HEK293 (cell line): ENCODE measurements at regions of chr6 and their contacts with region 1.

Region 1: GRCh38 chr6:44312901-44313788 is at the start of gene AARS2:
- H3K4me3 ChIP-seq: peak within 1 kb of the TSS; percentile 69
- H3K27ac ChIP-seq: peak within 1 kb of the TSS; percentile 71; the same call in 1 of the 2 replicates
- H3K4me1 ChIP-seq: peaks cover 5% of the 10 kb centered on the region; the same call in 1 of the 2 replicates
- CTCF ChIP-seq: peak; percentile 98

Region 2: DNA sequence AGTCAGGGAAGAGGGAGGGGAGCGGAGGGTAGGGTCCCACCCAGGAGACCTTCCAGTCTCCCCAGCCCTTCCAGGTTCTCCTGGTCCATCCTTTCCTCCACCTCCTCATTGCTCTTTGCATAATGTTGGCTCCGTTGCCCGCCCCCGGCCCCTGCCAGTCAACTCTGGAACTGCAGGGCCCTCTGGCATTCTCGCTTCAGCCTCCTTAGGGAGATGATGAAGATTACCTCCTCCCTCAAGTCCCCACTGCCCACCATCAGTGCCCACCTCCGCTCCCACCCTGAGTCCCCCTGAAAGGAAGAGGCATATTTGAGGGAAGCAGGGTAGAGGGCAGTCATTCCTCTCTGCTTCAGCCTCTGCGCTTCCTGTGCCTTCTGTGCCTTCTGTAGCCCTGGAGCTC is 177.3 kb before region 1 on chr6:
- CTCF ChIA-PET with region 1: no interaction called
- POLR2A ChIA-PET with region 1: no interaction called
- H3K4me3 ChIP-seq: no peak overlapping the region
- H3K27ac ChIP-seq: no peak overlapping the region
- H3K4me1 ChIP-seq: peaks cover 7% of the 10 kb centered on the region
- CTCF ChIP-seq: no peak

Region 3: GRCh38 chr6:44257025-44257752 is 56.0 kb before region 1 on chr6 and contains the start of gene SLC35B2:
- CTCF ChIA-PET with region 1: interaction called, 20 read pairs
- POLR2A ChIA-PET with region 1: interaction called, 15 read pairs
- H3K4me3 ChIP-seq: peak within 1 kb of the TSS; percentile 82
- H3K27ac ChIP-seq: peak within 1 kb of the TSS; percentile 65; the same call in 1 of the 2 replicates
- H3K4me1 ChIP-seq: no peaks in the 10 kb centered on the region
- CTCF ChIP-seq: 0 out of 2 replicates have a peak, but pooled peaks have one; percentile 32

Region 4: GRCh38 chr6:44265007-44265721 is 48.0 kb before region 1 on chr6 and contains the start of gene NFKBIE:
- CTCF ChIA-PET with region 1: interaction called, 89 read pairs
- POLR2A ChIA-PET with region 1: interaction called, 8 read pairs
- H3K4me3 ChIP-seq: peak within 1 kb of the TSS; percentile 62
- H3K27ac ChIP-seq: peak within 1 kb of the TSS; percentile 76; the same call in 1 of the 2 replicates
- H3K4me1 ChIP-seq: peaks cover 4% of the 10 kb centered on the region; the same call in 1 of the 2 replicates
- CTCF ChIP-seq: peak; percentile 98

Region 5: DNA sequence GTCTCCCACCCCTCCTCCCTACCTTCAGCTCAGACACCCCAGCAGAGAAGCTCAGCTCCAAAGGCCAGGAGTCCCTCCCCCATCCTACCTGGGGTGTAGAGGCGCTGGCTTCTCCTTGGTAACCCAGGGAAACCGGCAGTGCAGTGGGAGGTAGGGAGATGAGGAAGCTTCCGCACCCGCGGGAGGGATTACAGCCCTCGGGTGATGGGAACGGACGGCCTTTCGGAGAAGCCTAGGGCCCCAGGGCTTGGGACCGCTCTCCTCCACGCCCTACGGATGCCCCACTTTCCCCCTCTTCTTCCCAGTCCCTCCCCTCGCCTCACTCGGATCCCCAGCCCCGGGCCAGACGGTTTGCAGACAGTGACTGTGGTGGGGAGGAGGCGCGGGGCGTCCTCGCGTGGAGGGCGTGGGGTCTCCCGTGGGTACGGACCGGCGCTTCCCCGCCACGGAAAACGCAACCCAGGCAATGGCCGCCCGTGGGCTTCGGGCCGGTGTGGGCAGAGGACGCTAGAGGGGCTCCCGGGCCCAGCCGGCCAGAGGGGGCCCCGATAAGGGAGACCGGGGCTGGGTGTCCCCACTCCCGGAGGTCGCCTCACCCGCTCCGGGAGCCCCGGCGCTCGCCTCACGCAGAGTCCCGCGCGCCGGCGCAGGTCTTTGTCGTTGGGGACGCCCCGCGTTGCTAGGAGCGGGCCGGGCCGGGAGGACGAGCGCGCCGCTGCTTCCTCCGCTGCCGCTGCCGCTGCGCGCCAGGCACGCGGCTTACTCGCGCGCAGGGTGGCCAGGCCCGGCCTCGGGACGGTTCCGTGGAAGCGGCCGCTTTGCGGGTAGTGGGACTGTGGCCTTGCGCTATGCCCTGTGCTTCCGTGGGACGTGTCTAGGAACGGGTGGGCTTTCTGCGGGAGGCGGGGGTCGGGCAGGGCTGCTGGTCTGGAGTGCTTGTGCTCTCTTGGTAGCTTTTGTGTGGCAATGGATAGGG is 15.8 kb before region 1 on chr6:
- CTCF ChIA-PET with region 1: interaction called, 25 read pairs
- POLR2A ChIA-PET with region 1: interaction called, 20 read pairs
- H3K4me3 ChIP-seq: peak overlapping the region; percentile 44
- H3K27ac ChIP-seq: no peak overlapping the region
- H3K4me1 ChIP-seq: no peaks in the 10 kb centered on the region; the same call in 1 of the 2 replicates
- CTCF ChIP-seq: no peak

Region 6: GRCh38 chr6:44327096-44327495 is 14.0 kb after region 1 on chr6:
- CTCF ChIA-PET with region 1: interaction called, 18 read pairs
- POLR2A ChIA-PET with region 1: interaction called, 3 read pairs
- H3K4me3 ChIP-seq: no peak overlapping the region
- H3K27ac ChIP-seq: no peak overlapping the region
- H3K4me1 ChIP-seq: no peaks in the 10 kb centered on the region
- CTCF ChIP-seq: no peak

Region 7: DNA sequence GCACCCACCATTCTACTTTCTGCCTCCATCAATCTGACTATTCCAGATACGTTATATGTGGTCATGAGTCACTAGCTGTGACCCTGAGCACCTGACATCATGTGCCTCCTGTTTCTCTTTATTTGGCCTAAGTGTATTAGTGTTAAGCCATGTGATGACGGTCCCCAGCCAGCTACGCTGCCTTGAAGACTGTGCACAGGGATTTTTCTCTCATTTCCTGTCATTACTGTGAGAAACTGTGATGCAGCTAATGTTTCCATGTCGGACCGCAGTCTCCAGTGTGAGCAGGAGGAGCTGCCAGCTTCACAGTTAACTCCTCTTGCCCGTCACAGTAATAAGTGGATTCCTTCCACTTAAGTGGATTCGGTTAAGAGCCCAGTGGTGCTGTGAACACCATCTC is 19.4 kb after region 1 on chr6:
- CTCF ChIA-PET with region 1: interaction called, 24 read pairs
- POLR2A ChIA-PET with region 1: interaction called, 3 read pairs
- H3K4me3 ChIP-seq: no peak overlapping the region
- H3K27ac ChIP-seq: no peak overlapping the region
- H3K4me1 ChIP-seq: no peaks in the 10 kb centered on the region
- CTCF ChIP-seq: no peak

Region 8: GRCh38 chr6:45808917-45809316 is 1495.8 kb after region 1 on chr6:
- CTCF ChIA-PET with region 1: no interaction called
- POLR2A ChIA-PET with region 1: no interaction called
- H3K4me3 ChIP-seq: no peak overlapping the region
- H3K27ac ChIP-seq: no peak overlapping the region
- H3K4me1 ChIP-seq: no peaks in the 10 kb centered on the region
- CTCF ChIP-seq: no peak